Calu3 (cell line): ENCODE measurements at regions of chr2 and their contacts with region 1.

Region 1: GRCh38 chr2:43950383-43951008 is 45.3 kb downstream of the LRPPRC start:
- DNase-seq: peak; percentile 20
- H3K4me3 Mint-ChIP-seq: no peak overlapping the region
- H3K27ac Mint-ChIP-seq: no peak overlapping the region
- H3K4me1 Mint-ChIP-seq: no peaks in the 10 kb centered on the region
- H3K27me3 Mint-ChIP-seq: no peaks in the 10 kb centered on the region
- CTCF ChIP-seq: peak; percentile 38

Region 2: GRCh38 chr2:43905371-43905803 is 45.1 kb before region 1 on chr2:
- CTCF ChIA-PET with region 1: no interaction called
- intact Hi-C with region 1: loop called (anchors 10 kb)
- DNase-seq: no peak
- H3K4me3 Mint-ChIP-seq: no peak overlapping the region
- H3K27ac Mint-ChIP-seq: no peak overlapping the region
- H3K4me1 Mint-ChIP-seq: no peaks in the 10 kb centered on the region
- H3K27me3 Mint-ChIP-seq: no peaks in the 10 kb centered on the region
- CTCF ChIP-seq: no peak

Region 3: DNA sequence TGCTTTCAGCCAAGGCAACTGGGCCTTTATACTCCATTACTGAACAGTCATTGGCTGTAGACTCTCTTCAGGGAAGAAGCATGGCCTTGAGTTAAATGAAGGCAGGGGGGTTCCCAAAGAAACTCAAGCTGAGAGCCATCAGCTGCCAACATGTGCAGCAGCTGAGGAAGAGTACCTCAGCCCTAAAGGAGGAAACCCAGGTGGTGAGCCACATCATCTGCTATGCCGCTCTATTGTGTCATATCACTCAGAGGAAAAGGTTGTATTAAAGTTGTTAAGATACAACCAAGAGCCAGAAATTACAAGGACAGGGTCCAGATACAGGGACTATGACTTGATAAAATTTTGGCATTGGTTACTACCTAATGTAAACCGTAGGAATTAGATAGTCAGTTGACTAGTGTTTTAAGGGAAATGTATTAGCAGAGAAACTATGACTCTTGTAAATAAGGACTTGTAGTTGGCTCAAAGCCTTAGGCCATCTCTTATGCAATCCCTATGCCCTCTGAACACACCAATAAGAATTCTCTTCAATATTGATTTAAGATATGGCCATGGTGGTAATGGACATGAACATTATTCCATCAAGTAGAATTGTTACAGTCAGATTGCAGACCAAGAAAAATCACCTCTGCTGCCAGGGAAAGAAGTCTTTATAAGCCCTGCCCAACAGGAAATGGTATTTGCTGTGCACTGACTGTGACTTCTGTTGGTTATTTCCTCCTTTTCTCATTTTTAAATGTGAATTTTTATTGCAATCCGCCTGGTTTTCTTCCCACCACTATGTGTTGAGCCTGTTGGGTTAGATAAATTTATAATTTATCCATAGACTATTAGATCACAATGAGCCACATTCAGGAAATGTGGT is 54.5 kb after region 1 on chr2:
- CTCF ChIA-PET with region 1: no interaction called
- intact Hi-C with region 1: no loop called
- DNase-seq: no peak
- H3K4me3 Mint-ChIP-seq: no peak overlapping the region
- H3K27ac Mint-ChIP-seq: no peak overlapping the region
- H3K4me1 Mint-ChIP-seq: peaks cover 5% of the 10 kb centered on the region
- H3K27me3 Mint-ChIP-seq: peaks cover 14% of the 10 kb centered on the region
- CTCF ChIP-seq: no peak

Region 4: GRCh38 chr2:44167940-44168680 is 217.6 kb after region 1 on chr2:
- CTCF ChIA-PET with region 1: no interaction called
- intact Hi-C with region 1: no loop called
- DNase-seq: peak; percentile 97
- H3K4me3 Mint-ChIP-seq: peak overlapping the region; percentile 86
- H3K27ac Mint-ChIP-seq: peak overlapping the region; percentile 89
- H3K4me1 Mint-ChIP-seq: peaks cover 8% of the 10 kb centered on the region
- H3K27me3 Mint-ChIP-seq: no peaks in the 10 kb centered on the region
- CTCF ChIP-seq: no peak